ENCODE measurements at regions of chr16 and their contacts with region 1.

Region 1: GRCh38 chr16:30571695-30572600 is at the start of gene ZNF688:
- DNase-seq: peak; percentile 96
- H3K4me3 Mint-ChIP-seq: peak within 1 kb of the TSS; percentile 82
- H3K27ac Mint-ChIP-seq: peak within 1 kb of the TSS; percentile 90
- H3K4me1 Mint-ChIP-seq: peaks cover 55% of the 10 kb centered on the region
- H3K27me3 Mint-ChIP-seq: no peaks in the 10 kb centered on the region
- total RNA-seq, gene ZNF688: 19.2 to 22.8 TPM

Region 2: DNA sequence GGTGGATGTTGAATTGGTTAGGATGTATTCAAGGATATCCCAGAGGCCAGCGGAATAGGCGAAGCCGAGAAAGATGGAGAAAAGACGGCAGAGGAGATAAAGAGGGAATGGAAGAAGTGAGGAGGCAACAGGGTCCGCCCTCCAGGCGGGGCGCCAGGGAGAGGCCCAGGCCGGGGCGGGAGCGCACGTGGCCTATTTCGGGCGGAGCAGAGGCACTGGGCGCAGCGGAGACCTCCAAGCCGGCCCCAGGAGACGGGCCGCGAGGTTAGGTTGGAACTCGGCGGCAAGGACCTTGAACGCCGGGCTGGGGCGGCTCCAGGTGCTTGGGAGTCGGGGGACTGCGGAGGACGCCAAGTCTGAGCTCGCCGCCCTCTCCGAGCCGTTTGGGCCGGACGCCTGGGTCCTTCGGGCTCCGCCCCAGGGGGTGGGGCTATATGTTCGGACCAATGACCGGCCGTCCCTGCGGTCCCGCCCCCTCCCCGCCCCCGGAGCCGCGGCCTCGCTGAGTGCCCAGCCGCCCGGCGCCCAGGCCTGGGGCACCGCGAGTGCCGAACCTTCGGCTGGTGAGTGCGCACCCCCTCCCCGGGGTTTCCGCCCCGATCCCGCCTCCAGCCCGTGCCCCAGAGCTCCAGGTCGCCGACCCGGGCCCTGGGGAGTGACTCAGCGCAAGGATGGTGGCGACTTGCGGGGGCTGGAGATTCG is 164.7 kb before region 1 on chr16 and contains the start of gene ZNF771:
- CTCF ChIA-PET with region 1: no interaction called
- POLR2A ChIA-PET with region 1: no interaction called
- DNase-seq: peak; percentile 92
- H3K4me3 Mint-ChIP-seq: peak within 1 kb of the TSS; percentile 89
- H3K27ac Mint-ChIP-seq: peak within 1 kb of the TSS; percentile 79
- H3K4me1 Mint-ChIP-seq: peaks cover 37% of the 10 kb centered on the region
- H3K27me3 Mint-ChIP-seq: peaks cover 3% of the 10 kb centered on the region
- total RNA-seq, gene ZNF771: 4.2 to 4.5 TPM

Region 3: DNA sequence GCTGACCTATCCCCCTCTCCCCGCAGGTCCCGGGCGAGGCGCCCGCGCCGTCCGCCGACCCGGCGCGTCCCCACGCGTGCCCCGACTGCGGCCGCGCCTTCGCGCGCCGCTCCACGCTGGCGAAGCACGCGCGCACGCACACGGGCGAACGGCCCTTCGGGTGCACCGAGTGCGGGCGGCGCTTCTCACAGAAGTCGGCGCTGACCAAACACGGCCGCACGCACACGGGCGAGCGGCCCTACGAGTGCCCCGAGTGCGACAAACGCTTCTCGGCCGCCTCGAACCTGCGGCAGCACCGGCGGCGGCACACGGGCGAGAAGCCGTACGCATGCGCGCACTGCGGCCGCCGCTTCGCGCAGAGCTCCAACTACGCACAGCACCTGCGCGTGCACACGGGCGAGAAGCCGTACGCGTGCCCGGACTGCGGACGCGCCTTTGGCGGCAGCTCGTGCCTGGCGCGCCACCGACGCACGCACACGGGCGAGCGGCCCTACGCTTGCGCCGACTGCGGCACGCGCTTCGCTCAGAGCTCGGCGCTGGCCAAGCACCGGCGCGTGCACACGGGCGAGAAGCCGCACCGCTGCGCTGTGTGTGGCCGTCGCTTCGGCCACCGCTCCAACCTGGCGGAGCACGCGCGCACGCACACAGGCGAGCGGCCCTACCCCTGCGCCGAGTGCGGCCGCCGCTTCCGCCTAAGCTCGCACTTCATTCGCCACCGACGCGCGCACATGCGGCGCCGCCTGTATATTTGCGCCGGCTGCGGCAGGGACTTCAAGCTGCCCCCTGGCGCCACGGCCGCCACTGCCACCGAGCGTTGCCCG is 154.2 kb before region 1 on chr16:
- CTCF ChIA-PET with region 1: interaction called, 3 read pairs
- POLR2A ChIA-PET with region 1: interaction called, 10 read pairs
- DNase-seq: peak; percentile 92
- H3K4me3 Mint-ChIP-seq: peak overlapping the region; percentile 60
- H3K27ac Mint-ChIP-seq: peak overlapping the region; percentile 64
- H3K4me1 Mint-ChIP-seq: peaks cover 41% of the 10 kb centered on the region
- H3K27me3 Mint-ChIP-seq: no peaks in the 10 kb centered on the region

Region 4: DNA sequence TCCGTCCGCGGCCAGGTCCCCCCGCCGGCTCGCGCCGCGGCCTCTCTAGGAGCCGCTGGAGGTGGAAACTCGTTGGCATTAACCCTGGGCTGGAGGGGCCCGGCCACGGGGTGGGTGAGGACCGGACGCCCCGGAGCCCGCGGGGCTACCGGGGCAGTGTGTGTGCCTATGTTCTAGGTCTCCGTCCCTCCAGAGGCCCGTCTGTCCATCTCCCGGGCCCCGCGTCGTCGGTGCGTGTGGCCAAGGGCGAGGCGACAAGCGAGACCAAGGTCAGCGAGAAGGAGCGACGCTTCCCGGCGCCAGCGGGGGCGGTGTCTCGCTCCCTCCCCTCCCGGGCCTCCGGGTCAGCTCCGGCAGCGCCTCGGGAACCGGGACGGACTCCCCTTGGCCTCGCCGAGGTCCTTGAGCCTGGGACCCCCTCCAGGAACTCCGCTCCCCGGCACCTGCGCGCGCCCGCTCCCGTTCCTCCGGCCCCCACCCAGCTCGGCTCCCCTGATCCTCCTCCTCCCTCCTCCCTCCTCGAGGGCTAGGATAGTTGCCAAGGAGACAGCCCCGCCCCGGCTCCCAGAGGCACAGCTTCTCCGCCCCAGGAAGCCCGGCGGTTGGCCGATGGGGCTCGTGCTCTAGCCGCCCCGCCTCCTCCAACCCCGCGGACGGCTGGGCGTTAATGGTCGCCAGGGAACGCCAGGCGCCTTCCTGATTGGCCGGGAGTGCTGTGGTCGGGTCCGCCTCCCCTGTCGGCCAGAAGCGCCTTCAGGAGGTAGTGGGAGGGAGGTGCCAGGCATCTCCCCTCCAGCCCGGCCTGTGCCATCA is 44.9 kb before region 1 on chr16:
- CTCF ChIA-PET with region 1: interaction called, 5 read pairs
- POLR2A ChIA-PET with region 1: interaction called, 53 read pairs
- DNase-seq: peak; percentile 97
- H3K4me3 Mint-ChIP-seq: peak overlapping the region; percentile 78
- H3K27ac Mint-ChIP-seq: peak overlapping the region; percentile 67
- H3K4me1 Mint-ChIP-seq: peaks cover 40% of the 10 kb centered on the region
- H3K27me3 Mint-ChIP-seq: no peaks in the 10 kb centered on the region

Region 5: DNA sequence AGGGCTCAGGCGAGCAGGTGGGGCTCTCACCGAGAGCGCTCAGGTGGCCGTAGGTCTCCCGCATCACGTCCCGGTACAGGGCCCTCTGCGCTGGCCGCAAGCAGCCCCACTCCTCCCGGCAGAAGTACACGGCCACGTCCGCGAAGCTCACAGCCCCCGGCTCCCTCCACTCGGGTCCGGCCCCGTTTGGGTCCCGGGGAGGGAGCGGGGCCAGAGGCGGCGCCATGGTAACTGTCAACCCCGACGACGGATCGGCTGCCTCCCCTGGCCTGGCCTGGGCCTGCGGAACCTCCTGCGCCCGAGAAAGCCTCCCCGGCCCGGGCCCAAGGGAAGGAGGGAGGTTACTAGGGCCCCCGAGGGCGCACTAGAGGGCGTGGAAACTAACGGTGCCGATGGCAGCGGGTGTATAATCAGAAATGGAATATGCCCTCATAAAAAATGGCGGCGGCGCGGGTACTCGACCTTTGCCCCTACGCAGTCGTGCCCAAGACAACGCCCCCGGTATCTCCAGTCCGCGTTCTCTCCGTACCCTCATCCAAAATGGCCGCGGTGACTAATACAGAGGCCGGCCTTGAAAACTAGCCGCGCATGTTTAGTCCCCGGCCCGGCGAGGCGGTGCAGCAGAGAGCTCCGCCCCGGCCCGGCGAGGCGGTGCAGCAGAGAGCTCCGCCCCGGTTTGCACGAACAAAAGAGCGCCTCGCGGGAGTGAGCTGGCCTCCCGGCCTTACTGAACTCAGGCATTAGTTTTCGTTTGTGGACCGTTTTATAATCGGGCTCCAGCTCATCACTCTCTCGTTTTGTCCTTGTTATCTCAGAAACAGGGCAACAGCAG is 13.8 kb before region 1 on chr16 and contains the start of gene ZNF764:
- CTCF ChIA-PET with region 1: interaction called, 26 read pairs
- POLR2A ChIA-PET with region 1: interaction called, 129 read pairs
- DNase-seq: peak; percentile 99
- H3K4me3 Mint-ChIP-seq: peak within 1 kb of the TSS; percentile 86
- H3K27ac Mint-ChIP-seq: peak within 1 kb of the TSS; percentile 90
- H3K4me1 Mint-ChIP-seq: peaks cover 51% of the 10 kb centered on the region
- H3K27me3 Mint-ChIP-seq: no peaks in the 10 kb centered on the region
- total RNA-seq, gene ZNF764: 16.0 to 16.8 TPM

Region 6: DNA sequence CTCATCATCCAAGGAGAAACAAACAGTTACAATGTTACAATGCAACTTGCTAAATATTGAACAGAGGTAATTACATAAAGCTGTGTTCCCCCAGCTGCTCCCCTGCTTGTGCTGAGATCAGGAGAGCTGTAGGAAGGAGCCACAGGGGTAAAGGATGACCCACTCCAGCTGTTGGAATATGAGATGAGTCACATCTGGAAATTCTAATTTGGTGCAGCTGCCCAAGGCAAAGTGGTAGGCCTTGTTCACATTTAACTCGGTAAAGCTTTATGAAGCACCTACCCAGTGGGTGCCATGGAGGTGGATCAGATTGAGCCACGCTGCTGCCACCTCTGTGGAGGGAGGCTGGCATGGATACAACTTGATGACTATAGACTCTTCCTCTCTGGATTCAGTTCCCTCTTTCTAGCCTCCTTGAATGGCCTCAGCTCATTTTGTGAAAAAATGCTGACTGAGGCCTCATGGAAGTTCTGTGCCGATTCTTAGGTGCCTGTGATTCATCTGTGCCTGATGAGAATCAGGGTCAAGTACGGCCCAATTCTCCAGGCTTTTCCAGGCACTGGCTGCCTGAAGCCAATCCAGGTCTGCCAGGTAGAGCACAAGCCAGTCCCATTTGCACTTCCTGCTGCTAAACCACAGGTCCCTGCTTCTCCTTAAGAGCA is 30.8 kb after region 1 on chr16:
- CTCF ChIA-PET with region 1: interaction called, 5 read pairs
- POLR2A ChIA-PET with region 1: interaction called, 14 read pairs
- DNase-seq: no peak
- H3K4me3 Mint-ChIP-seq: no peak overlapping the region
- H3K27ac Mint-ChIP-seq: no peak overlapping the region
- H3K4me1 Mint-ChIP-seq: peaks cover 11% of the 10 kb centered on the region
- H3K27me3 Mint-ChIP-seq: no peaks in the 10 kb centered on the region

Region 7: GRCh38 chr16:30644334-30644830 is 72.4 kb after region 1 on chr16:
- CTCF ChIA-PET with region 1: no interaction called
- POLR2A ChIA-PET with region 1: no interaction called
- DNase-seq: no peak
- H3K4me3 Mint-ChIP-seq: no peak overlapping the region
- H3K27ac Mint-ChIP-seq: no peak overlapping the region
- H3K4me1 Mint-ChIP-seq: peaks cover 3% of the 10 kb centered on the region
- H3K27me3 Mint-ChIP-seq: peaks cover 6% of the 10 kb centered on the region

Region 8: DNA sequence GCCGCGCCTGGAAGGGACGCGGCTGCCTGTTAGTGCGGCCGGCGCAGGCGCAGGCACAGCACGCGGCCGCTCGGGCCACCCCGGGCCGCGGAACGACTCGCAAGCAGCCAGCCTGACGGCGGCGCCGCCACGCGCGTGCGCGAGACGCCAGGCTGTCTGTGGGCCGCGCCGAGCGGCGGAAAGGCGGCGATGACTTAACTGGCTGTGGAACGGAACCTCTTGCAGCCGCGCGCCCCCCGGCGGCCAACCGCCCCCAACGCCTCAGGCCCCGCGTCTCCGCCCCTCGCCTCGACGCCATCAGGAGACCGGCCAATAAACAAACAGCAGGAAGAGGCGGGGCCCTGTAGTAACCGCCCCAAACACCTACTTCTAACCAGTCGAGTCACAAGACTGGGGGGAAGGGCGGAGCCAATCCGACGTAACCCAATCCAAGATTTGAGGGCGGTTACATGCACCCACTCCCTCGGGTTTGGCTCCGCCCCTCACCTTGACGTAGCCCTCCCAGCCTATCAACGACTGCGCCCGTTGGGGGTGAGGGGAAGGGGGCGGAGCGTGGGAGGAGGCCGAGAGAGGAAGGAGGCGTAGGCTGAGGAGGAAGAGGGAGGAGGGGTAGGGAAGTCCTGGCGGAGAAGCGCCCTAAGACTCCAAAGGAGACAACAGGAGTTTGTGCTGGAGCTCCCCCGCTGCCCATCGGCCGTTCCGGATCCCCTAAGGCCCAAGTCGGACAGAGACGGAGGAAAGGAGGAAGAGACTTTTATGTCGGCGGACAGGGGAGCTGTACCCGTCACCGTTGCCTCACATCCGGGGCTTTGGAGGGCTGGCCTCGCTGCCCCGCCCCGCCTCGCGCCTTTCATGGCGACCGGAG is 86.2 kb after region 1 on chr16 and contains the start of gene FBRS:
- CTCF ChIA-PET with region 1: interaction called, 5 read pairs
- POLR2A ChIA-PET with region 1: interaction called, 13 read pairs
- DNase-seq: peak; percentile 100
- H3K4me3 Mint-ChIP-seq: peak within 1 kb of the TSS; percentile 86
- H3K27ac Mint-ChIP-seq: peak within 1 kb of the TSS; percentile 98
- H3K4me1 Mint-ChIP-seq: peaks cover 47% of the 10 kb centered on the region
- H3K27me3 Mint-ChIP-seq: no peaks in the 10 kb centered on the region
- total RNA-seq, gene FBRS: 106 to 107 TPM

Region 9: GRCh38 chr16:30805370-30806169 is 233.6 kb after region 1 on chr16:
- CTCF ChIA-PET with region 1: no interaction called
- POLR2A ChIA-PET with region 1: no interaction called
- DNase-seq: peak; percentile 25
- H3K4me3 Mint-ChIP-seq: peak overlapping the region; percentile 43
- H3K27ac Mint-ChIP-seq: no peak overlapping the region
- H3K4me1 Mint-ChIP-seq: peaks cover 23% of the 10 kb centered on the region
- H3K27me3 Mint-ChIP-seq: peaks cover 13% of the 10 kb centered on the region